Activated CD4-positive, alpha-beta T cell treated with anti-CD3 and anti-CD28 coated beads for 36 hours (primary cell): ENCODE measurements at regions of chr9 and their contacts with region 1.

Region 1: DNA sequence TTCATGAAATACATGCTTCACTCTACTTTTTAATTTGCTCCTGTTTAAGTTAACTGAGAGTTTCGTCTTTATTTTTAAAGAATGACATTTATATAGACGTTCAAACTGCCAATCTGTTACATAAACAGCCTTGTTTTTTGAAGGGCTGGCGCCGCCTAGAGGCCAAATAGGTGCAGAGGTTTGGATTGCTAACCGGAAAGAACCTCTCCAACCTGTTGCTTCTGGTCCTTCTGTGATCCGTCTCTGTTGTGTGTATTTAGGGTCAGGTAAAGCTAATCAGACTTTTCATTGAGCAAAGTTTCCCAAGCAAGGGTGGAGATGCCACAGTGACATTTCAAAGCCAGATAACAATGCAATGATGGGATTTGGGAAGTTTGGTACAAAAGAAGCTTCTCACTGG is 39.5 kb upstream of the GLIS3 start:
- DNase-seq: peak; percentile 91
- ATAC-seq: peak; percentile 94
- H3K4me3 Mint-ChIP-seq: peak overlapping the region; percentile 30
- H3K27ac Mint-ChIP-seq: peak overlapping the region; percentile 65
- H3K4me1 Mint-ChIP-seq: peaks cover 15% of the 10 kb centered on the region
- H3K27me3 Mint-ChIP-seq: no peaks in the 10 kb centered on the region

Region 2: DNA sequence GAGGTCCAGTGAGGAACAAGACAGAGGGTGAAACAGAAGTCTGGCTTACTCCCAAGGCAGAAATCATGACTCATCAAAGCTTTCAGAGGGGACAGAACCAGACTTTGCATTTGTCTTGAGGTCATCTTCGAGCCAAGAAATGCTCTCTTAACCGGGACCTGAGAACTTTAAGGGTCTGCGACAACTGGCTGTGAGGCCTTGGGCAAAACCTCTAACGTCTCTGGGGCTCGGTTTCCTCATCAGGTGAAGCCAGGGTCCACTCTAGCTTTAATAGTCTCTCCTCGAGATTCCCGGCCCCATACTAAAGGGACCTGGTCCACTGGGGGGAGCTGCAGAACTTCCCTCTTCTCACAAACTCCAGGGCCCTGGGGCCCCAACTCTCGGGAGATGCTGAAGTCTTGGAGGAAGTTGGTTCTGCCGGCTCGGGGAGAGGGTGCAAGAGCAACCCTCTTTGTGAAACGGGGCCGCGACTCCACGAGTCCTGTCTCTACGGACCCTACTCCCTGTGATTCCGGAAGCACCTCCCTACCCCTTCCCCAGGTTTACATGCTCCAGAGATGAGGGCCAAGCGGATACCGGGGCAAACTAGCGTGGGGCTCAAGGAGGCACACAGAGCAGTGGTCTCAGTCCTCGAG is 42.1 kb before region 1 on chr9:
- CTCF ChIA-PET with region 1: interaction called, 5 read pairs
- POLR2A ChIA-PET with region 1: no interaction called
- intact Hi-C with region 1: loop called in 1 of 2 experiments (anchors 2 kb)
- DNase-seq: peak; percentile 65
- ATAC-seq: peak; percentile 37
- H3K4me3 Mint-ChIP-seq: peak overlapping the region; percentile 86
- H3K27ac Mint-ChIP-seq: peak overlapping the region; percentile 86
- H3K4me1 Mint-ChIP-seq: peaks cover 45% of the 10 kb centered on the region
- H3K27me3 Mint-ChIP-seq: peaks cover 32% of the 10 kb centered on the region

Region 3: GRCh38 chr9:4306066-4306775 is 33.1 kb before region 1 on chr9:
- CTCF ChIA-PET with region 1: interaction called, 10 read pairs
- POLR2A ChIA-PET with region 1: no interaction called
- intact Hi-C with region 1: loop called in 1 of 2 experiments (anchors 2 kb)
- DNase-seq: peak; percentile 65
- ATAC-seq: peak; percentile 81
- H3K4me3 Mint-ChIP-seq: no peak overlapping the region
- H3K27ac Mint-ChIP-seq: peak overlapping the region; percentile 68
- H3K4me1 Mint-ChIP-seq: peaks cover 48% of the 10 kb centered on the region
- H3K27me3 Mint-ChIP-seq: peaks cover 3% of the 10 kb centered on the region

Region 4: GRCh38 chr9:4315582-4316215 is 23.7 kb before region 1 on chr9:
- CTCF ChIA-PET with region 1: interaction called, 75 read pairs
- POLR2A ChIA-PET with region 1: no interaction called
- intact Hi-C with region 1: loop called (anchors 1 kb)
- DNase-seq: peak; percentile 88
- ATAC-seq: peak; percentile 97
- H3K4me3 Mint-ChIP-seq: no peak overlapping the region
- H3K27ac Mint-ChIP-seq: no peak overlapping the region
- H3K4me1 Mint-ChIP-seq: no peaks in the 10 kb centered on the region
- H3K27me3 Mint-ChIP-seq: peaks cover 4% of the 10 kb centered on the region

Region 5: GRCh38 chr9:4327504-4328191 is 11.7 kb before region 1 on chr9:
- CTCF ChIA-PET with region 1: interaction called, 15 read pairs
- POLR2A ChIA-PET with region 1: no interaction called
- intact Hi-C with region 1: no loop called
- DNase-seq: peak; percentile 16
- ATAC-seq: no peak
- H3K4me3 Mint-ChIP-seq: no peak overlapping the region
- H3K27ac Mint-ChIP-seq: no peak overlapping the region
- H3K4me1 Mint-ChIP-seq: peaks cover 18% of the 10 kb centered on the region
- H3K27me3 Mint-ChIP-seq: no peaks in the 10 kb centered on the region

Region 6: GRCh38 chr9:4353236-4353635 is 13.9 kb after region 1 on chr9:
- CTCF ChIA-PET with region 1: interaction called, 10 read pairs
- POLR2A ChIA-PET with region 1: no interaction called
- intact Hi-C with region 1: no loop called
- DNase-seq: no peak
- ATAC-seq: no peak
- H3K4me3 Mint-ChIP-seq: no peak overlapping the region
- H3K27ac Mint-ChIP-seq: no peak overlapping the region
- H3K4me1 Mint-ChIP-seq: no peaks in the 10 kb centered on the region
- H3K27me3 Mint-ChIP-seq: peaks cover 10% of the 10 kb centered on the region

Region 7: GRCh38 chr9:4404156-4404555 is 64.8 kb after region 1 on chr9:
- CTCF ChIA-PET with region 1: no interaction called
- POLR2A ChIA-PET with region 1: no interaction called
- intact Hi-C with region 1: no loop called
- DNase-seq: no peak
- ATAC-seq: no peak
- H3K4me3 Mint-ChIP-seq: no peak overlapping the region
- H3K27ac Mint-ChIP-seq: no peak overlapping the region
- H3K4me1 Mint-ChIP-seq: no peaks in the 10 kb centered on the region
- H3K27me3 Mint-ChIP-seq: no peaks in the 10 kb centered on the region